ENCODE measurements at regions of chr7 and their contacts with region 1.

Region 1: GRCh38 chr7:129739427-129739826 is 127.9 kb downstream of the NRF1 start:
- DNase-seq: no peak
- ATAC-seq: no peak
- H3K4me3 ChIP-seq: no peak overlapping the region
- H3K27ac ChIP-seq: no peak overlapping the region
- H3K4me1 ChIP-seq: no peaks in the 10 kb centered on the region
- H3K27me3 ChIP-seq: no peaks in the 10 kb centered on the region
- CTCF ChIP-seq: no peak

Region 2: GRCh38 chr7:129721068-129721467 is 18.4 kb before region 1 on chr7:
- CTCF ChIA-PET with region 1: no interaction called
- POLR2A ChIA-PET with region 1: no interaction called
- in situ Hi-C with region 1: no loop called
- intact Hi-C with region 1: loop called (anchors 1 kb)
- DNase-seq: no peak
- ATAC-seq: no peak
- H3K4me3 ChIP-seq: no peak overlapping the region
- H3K27ac ChIP-seq: no peak overlapping the region
- H3K4me1 ChIP-seq: no peaks in the 10 kb centered on the region
- H3K27me3 ChIP-seq: no peaks in the 10 kb centered on the region
- CTCF ChIP-seq: no peak

Region 3: DNA sequence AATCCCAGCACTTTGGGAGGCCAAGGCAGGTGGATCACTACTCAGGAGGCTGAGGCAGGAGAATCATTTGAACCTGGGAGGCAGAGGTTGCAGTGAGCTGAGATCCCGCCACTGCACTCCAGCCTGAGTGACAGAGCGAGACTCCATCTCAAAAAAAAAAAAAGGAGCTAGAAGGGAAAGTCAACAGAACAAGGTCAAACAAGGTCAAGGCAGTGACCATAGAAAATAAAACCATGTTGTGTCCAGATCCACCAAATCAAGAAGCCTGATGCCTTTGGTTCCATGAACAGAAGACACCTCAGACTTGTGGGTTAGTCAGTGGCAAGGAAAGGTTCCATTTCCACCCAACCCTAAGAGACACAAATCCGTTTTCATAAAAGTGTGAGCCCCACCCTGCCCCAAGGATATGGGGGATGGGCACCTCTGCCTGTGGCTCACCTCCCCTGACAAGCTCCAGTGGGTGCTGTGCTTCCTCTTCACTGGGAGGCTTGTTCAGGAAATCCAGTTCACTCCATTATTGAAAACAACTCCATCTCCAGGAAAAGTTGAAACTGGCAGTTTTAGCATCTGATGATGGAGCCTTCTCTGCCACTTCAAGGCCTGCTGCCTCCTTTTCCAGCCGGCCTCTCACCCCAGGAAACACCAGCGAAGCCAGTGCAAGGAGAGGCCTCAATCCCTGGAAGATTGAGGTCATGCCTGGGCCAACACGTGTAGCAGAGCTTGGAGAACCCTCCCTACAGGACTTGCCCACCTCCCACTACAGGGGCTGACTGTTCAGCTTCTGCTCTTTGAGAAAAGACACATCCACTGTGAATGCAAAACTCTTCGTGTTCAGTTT is 25.0 kb after region 1 on chr7:
- CTCF ChIA-PET with region 1: no interaction called
- POLR2A ChIA-PET with region 1: interaction called, 17 read pairs
- in situ Hi-C with region 1: no loop called
- intact Hi-C with region 1: no loop called
- DNase-seq: no peak
- ATAC-seq: no peak
- H3K4me3 ChIP-seq: no peak overlapping the region
- H3K27ac ChIP-seq: no peak overlapping the region
- H3K4me1 ChIP-seq: no peaks in the 10 kb centered on the region
- H3K27me3 ChIP-seq: no peaks in the 10 kb centered on the region
- CTCF ChIP-seq: no peak

Measured in Panc1 (cell line).